ENCODE measurements at regions of chr3 and their contacts with region 1.

Region 1: GRCh38 chr3:129688271-129688895 is 81.9 kb upstream of the PLXND1 start:
- DNase-seq: peak; percentile 84 to 97 (median 93)
- H3K4me3 ChIP-seq: peak overlapping the region; percentile 35 to 73 (median 59)
- H3K27ac ChIP-seq: peak overlapping the region; percentile 73 to 97 (median 94)
- H3K27me3 ChIP-seq: no peaks in the 10 kb centered on the region
- CTCF ChIP-seq: peak in 13 of 56 donors; percentile 6 to 22 (median 11)

Region 2: DNA sequence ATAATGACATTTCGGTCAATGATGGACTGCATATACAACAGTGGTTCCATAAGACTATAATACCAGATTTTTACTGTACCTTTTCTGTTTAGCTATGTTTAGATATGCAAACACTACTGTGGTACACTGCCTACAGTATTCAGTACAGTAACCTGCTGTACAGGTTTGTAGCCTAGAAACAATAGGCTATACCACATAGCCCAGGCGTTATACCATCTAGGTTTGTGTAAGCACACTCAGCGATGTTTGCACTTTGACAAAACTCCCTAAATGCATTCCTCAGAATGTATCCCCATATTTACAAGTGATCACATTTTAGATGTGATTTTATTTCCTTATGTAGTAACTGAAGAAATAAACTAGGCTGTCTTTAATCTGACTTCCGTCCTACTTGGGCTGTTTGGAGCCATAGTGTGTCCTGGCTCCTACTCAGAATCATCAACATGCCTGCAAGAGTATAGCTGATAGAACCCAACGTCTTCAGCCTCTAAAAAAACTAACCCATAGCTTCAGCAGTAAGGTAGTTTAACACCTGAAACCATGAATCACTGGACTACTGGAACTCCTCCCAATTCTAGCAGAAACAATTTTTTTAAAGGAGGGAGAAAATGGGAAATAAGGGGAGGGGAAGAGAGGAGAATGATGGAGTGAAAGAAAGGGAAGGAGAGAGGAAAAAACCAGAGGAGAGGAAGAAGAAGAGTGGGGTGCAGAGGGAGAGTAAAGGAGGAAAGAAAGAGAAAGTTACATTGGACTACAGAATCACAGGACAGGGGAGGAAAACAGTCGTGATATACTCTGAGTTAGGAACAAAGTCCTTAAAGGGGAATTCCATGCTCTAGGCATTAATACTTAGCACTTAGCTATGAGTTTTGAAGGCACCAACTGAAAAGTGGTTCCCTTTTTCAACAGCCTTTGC is 14.2 kb before region 1 on chr3:
- intact Hi-C with region 1: no loop called
- DNase-seq: no peak
- H3K4me3 ChIP-seq: no peak overlapping the region
- H3K27ac ChIP-seq: no peak overlapping the region
- H3K27me3 ChIP-seq: no peaks in the 10 kb centered on the region
- CTCF ChIP-seq: no peak

Region 3: GRCh38 chr3:129732200-129732876 is 44.0 kb after region 1 on chr3:
- intact Hi-C with region 1: loop called in 1 of 2 experiments (anchors 10 kb)
- DNase-seq: no peak
- H3K4me3 ChIP-seq: peak overlapping the region in 3 of 59 donors; percentile 0 to 18 (median 0)
- H3K27ac ChIP-seq: peak overlapping the region in 50 of 59 donors; percentile 1 to 83 (median 52)
- H3K27me3 ChIP-seq: no peaks in the 10 kb centered on the region
- CTCF ChIP-seq: no peak

Measured in dorsolateral prefrontal cortex (tissue), 120 donors.